ENCODE measurements at regions of chr15 and their contacts with region 1.

Region 1: GRCh38 chr15:45414215-45414885 is 36.0 kb upstream of the GATM start:
- DNase-seq: no peak
- H3K4me3 ChIP-seq: no peak overlapping the region
- CTCF ChIP-seq: no peak

Region 2: DNA sequence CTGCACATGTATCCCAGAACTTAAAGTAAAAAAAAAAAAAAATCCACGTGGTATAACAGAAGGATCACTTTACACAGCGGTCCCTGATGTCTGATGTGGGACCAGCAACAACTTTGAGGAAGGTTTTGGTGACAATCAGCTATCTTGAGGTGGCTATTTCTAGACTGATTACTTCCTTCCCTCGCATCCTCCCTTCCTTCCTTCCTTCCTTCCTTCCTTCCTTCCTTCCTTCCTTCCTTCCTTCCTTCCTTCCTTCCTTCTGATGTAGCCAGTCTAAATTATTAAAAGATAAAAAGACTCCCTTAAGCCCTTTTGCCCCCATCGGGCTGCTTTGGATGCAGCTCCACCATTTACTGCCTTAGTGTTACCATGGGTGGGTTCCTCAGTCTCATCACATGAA is 376.4 kb before region 1 on chr15:
- CTCF ChIA-PET with region 1: no interaction called
- POLR2A ChIA-PET with region 1: no interaction called
- DNase-seq: no peak
- H3K4me3 ChIP-seq: no peak overlapping the region
- CTCF ChIP-seq: no peak

Region 3: DNA sequence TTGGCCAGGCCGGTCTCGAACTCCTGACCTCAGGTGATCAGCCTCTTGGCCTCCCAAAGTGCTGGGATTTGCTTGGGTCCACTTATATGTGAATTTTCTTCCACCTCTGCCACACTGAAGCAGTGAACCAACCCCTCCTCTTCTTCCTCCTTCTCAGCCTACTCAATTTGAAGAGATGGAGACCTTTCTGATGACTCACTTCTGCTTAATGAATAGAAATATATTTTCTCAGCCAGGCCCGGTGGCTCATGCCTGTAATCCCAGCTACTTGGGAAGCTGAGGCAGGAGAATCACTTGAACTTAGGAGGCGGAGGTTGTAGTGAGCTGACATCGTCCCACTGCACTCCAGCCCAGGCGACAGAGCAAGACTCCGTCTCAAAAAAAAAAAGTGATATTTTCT is 10.8 kb after region 1 on chr15:
- CTCF ChIA-PET with region 1: interaction called, 85 read pairs
- POLR2A ChIA-PET with region 1: no interaction called
- DNase-seq: no peak
- H3K4me3 ChIP-seq: no peak overlapping the region
- CTCF ChIP-seq: no peak